Mammary epithelial cell (primary cell): ENCODE measurements at regions of chr19 and their contacts with region 1.

Region 1: GRCh38 chr19:40662921-40663694 is 27.3 kb downstream of the NUMBL start:
- DNase-seq: peak; percentile 70
- H3K4me3 ChIP-seq: peak overlapping the region; percentile 74 to 85 (median 77)
- H3K27ac ChIP-seq: peak overlapping the region; percentile 31
- H3K4me1 ChIP-seq: peaks cover 22% of the 10 kb centered on the region
- H3K27me3 ChIP-seq: no peaks in the 10 kb centered on the region
- CTCF ChIP-seq: peak; percentile 73 to 94

Region 2: GRCh38 chr19:40690693-40691420 is 27.7 kb after region 1 on chr19:
- CTCF ChIA-PET with region 1: no interaction called
- dilution Hi-C with region 1: no loop called
- in situ Hi-C with region 1: no loop called
- intact Hi-C with region 1: loop called (anchors 2 kb)
- DNase-seq: peak; percentile 86
- H3K4me3 ChIP-seq: peak overlapping the region; percentile 29 to 61 (median 39)
- H3K27ac ChIP-seq: peak overlapping the region; percentile 50
- H3K4me1 ChIP-seq: peaks cover 18% of the 10 kb centered on the region
- H3K27me3 ChIP-seq: no peaks in the 10 kb centered on the region
- CTCF ChIP-seq: no peak

Region 3: DNA sequence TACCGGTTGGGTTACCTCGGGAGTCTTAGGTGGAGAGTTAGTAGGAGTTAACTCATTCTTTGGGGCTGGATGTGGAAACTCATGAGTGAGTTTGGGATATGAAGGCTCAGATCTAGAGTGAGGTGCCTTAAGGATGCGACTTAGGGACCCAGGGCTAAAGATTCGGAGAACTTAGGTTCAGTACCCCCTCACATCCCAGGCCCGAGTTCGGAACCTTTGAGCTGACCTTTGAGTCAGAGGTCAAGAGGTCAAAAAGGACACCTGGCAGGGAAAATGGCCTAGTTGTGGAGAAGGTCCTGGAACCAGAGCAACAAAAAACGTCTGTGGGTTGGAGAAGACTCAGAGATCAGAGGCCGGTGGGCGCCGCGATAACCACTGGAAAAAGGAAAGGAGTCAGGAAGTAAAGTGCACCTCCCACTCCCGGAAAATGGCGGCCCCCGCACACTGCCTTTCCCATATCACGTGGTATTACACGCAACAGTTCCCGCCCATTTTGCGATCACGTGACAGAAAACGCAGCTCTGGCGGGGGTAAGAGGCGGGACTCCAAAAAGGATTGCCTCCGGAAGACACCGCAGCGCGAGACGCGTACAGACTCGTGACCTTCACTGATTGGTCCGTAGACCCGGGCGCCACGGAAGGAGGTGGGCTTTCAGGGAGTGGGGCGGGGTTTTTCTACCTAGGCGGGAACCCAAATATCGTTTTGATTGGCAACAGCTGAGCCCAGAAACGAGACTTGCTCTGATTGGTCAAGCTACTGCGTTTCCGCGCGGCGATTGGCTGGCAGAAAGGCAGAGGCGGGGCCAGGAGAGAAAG is 87.2 kb after region 1 on chr19 and contains the start of gene ACTMAP:
- CTCF ChIA-PET with region 1: no interaction called
- dilution Hi-C with region 1: no loop called
- in situ Hi-C with region 1: no loop called
- intact Hi-C with region 1: loop called (anchors 2 kb)
- DNase-seq: peak; percentile 100
- H3K4me3 ChIP-seq: peak within 1 kb of the TSS; percentile 66 to 71 (median 67)
- H3K27ac ChIP-seq: peak within 1 kb of the TSS; percentile 94
- H3K4me1 ChIP-seq: peaks cover 26% of the 10 kb centered on the region
- H3K27me3 ChIP-seq: no peaks in the 10 kb centered on the region
- CTCF ChIP-seq: no peak
- total RNA-seq, gene ACTMAP: 1.0 to 15.2 TPM

Region 4: GRCh38 chr19:40777937-40778705 is 115.0 kb after region 1 on chr19 and contains the start of gene RAB4B:
- CTCF ChIA-PET with region 1: no interaction called
- dilution Hi-C with region 1: no loop called
- in situ Hi-C with region 1: no loop called
- intact Hi-C with region 1: no loop called
- DNase-seq: peak; percentile 99
- H3K4me3 ChIP-seq: peak within 1 kb of the TSS; percentile 57 to 89 (median 60)
- H3K27ac ChIP-seq: peak within 1 kb of the TSS; percentile 99
- H3K4me1 ChIP-seq: peaks cover 27% of the 10 kb centered on the region
- H3K27me3 ChIP-seq: no peaks in the 10 kb centered on the region
- CTCF ChIP-seq: no peak
- total RNA-seq, gene RAB4B: 9.0 to 23.5 TPM

Region 5: DNA sequence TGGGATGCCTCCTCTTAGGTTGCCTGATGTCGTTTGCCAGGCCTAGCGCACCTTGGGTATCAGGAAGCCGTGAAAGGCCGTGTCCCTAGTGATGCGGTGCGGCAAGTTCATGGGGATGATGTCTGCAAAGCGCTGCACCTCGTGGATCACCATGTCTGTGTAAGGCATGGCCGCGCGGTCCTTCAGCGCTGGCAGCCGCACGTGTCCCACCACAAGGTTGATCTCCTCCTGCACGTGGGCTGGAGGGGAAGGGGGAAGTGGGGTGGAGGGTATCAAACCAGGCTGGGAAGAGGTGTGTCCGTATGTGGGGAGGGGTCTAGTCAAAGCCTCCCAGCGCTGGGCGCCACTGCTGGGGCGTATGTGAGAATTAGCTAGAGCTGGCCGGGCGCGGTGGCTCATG is 159.1 kb after region 1 on chr19:
- CTCF ChIA-PET with region 1: no interaction called
- dilution Hi-C with region 1: no loop called
- in situ Hi-C with region 1: loop called in 1 of 2 experiments (anchors 10 kb)
- intact Hi-C with region 1: loop called (anchors 1 kb)
- DNase-seq: no peak
- H3K4me3 ChIP-seq: no peak overlapping the region
- H3K27ac ChIP-seq: no peak overlapping the region
- H3K4me1 ChIP-seq: no peaks in the 10 kb centered on the region
- H3K27me3 ChIP-seq: no peaks in the 10 kb centered on the region
- CTCF ChIP-seq: no peak

Region 6: DNA sequence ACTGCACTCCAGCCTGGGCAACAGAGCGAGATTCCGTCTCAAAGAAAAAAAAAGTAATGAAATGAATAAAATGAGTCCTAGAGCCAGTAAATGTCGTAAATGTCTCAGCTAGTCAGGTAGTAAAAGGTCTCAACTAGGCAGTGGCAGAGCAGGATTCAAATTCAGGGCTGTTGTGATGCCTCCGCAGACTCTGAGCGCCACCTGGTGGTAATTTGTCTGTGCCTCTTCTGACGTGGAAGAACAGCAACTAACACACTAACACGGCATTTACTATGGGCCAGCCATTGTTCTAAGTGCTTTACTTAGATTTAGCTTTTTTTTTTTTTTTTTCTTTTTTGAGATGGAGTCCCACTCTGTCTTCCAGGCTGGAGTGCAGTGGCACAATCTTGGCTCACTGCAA is 481.3 kb after region 1 on chr19:
- CTCF ChIA-PET with region 1: no interaction called
- dilution Hi-C with region 1: no loop called
- in situ Hi-C with region 1: loop called (anchors 10 kb)
- intact Hi-C with region 1: loop called (anchors 1 kb)
- DNase-seq: peak; percentile 62
- H3K4me3 ChIP-seq: no peak overlapping the region
- H3K27ac ChIP-seq: no peak overlapping the region
- H3K4me1 ChIP-seq: no peaks in the 10 kb centered on the region
- H3K27me3 ChIP-seq: no peaks in the 10 kb centered on the region
- CTCF ChIP-seq: peak; percentile 83 to 86